ENCODE measurements at regions of chr17 and their contacts with region 1.

Region 1: GRCh38 chr17:29847527-29848400 is 82.3 kb downstream of the SSH2 start:
- DNase-seq: no peak
- H3K4me3 ChIP-seq: no peak overlapping the region
- H3K27me3 ChIP-seq: no peaks in the 10 kb centered on the region
- CTCF ChIP-seq: no peak

Region 2: GRCh38 chr17:29742199-29742533 is 105.6 kb before region 1 on chr17:
- CTCF ChIA-PET with region 1: no interaction called
- POLR2A ChIA-PET with region 1: no interaction called
- DNase-seq: no peak
- H3K4me3 ChIP-seq: no peak overlapping the region
- H3K27me3 ChIP-seq: no peaks in the 10 kb centered on the region
- CTCF ChIP-seq: no peak

Region 3: GRCh38 chr17:29789196-29790170 is 58.3 kb before region 1 on chr17:
- CTCF ChIA-PET with region 1: no interaction called
- POLR2A ChIA-PET with region 1: interaction called, 10 read pairs
- DNase-seq: no peak
- H3K4me3 ChIP-seq: no peak overlapping the region
- H3K27me3 ChIP-seq: no peaks in the 10 kb centered on the region
- CTCF ChIP-seq: no peak

Region 4: DNA sequence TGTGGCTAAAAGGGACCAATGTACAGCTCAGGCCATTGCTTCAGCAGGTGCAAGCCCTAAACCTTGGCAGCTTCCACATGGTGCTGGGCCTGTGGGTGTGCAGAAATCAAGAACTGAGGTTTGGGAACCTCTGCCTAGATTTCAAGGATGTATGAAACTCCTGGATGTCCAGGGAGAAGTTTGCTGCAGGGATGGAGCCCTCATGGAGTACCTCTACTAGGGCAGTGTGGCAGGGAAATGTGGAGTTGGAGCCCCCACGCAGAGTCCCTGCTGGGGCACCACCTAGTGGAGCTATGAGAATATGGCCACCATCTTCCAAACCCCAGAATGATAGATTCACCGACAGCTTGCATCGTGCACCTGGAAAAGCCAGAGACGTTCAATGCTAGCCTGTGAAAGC is 106.6 kb after region 1 on chr17:
- CTCF ChIA-PET with region 1: no interaction called
- POLR2A ChIA-PET with region 1: no interaction called
- DNase-seq: no peak
- H3K4me3 ChIP-seq: no peak overlapping the region
- H3K27me3 ChIP-seq: no peaks in the 10 kb centered on the region
- CTCF ChIP-seq: peak; percentile 7; the same call in 1 of the 2 replicates

Region 5: GRCh38 chr17:29972277-29972676 is 124.5 kb after region 1 on chr17:
- CTCF ChIA-PET with region 1: no interaction called
- POLR2A ChIA-PET with region 1: interaction called, 24 read pairs
- DNase-seq: no peak
- H3K4me3 ChIP-seq: no peak overlapping the region
- H3K27me3 ChIP-seq: no peaks in the 10 kb centered on the region
- CTCF ChIP-seq: no peak

Measured in BJ (cell line).